AG04450 (cell line): ENCODE measurements at regions of chr18 and their contacts with region 1.

Region 1: DNA sequence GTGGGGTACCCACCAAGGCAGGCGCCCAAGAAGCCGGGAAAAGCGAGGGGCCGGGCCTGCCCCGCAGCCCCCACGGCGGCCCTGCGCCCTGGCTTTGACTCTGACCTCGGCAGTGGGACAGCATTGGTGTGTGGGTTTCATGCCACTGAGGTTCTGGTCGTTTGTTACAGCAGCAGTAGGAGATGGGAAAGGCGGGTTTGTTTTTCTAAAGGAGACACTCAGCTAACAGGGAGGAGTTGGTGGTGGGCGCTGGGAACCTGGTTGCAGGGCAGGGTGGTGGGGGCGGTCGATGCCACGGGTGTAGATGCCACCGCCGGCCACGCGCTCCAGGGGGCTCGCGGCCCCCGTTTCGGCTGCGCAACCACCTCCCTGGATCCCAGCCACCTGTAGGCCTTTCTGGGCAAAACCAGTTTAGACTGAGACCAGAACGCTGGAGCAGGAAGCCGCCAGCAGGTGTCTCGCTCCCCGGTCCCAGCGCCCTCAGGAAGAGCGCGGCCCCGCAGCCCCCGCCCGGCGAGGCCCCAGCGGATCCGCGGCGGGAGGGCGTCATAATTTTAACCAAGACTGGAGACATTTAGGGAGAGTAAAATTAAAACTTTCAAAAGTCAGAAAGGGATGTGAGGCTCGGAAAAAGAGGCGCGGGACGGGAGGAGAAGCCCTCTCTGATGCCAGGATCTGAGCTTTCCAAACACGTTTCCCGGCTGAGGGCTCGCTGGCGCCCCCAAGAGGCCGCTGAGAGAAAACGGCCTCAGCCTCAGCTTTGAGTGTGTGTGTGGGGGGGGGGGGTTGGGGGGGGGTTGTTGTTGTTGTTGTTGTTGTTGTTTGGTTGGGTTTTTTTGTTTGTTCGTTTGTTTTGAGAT is 17.4 kb downstream of the CIDEA start:
- DNase-seq: no peak
- H3K4me3 ChIP-seq: peak overlapping the region; percentile 59
- H3K27ac ChIP-seq: peak overlapping the region; percentile 31
- H3K27me3 ChIP-seq: peaks cover 3% of the 10 kb centered on the region
- CTCF ChIP-seq: peak; percentile 75

Region 2: GRCh38 chr18:12236934-12237832 is 34.4 kb before region 1 on chr18:
- CTCF ChIA-PET with region 1: interaction called, 16 read pairs
- POLR2A ChIA-PET with region 1: no interaction called
- DNase-seq: no peak
- H3K4me3 ChIP-seq: no peak overlapping the region
- H3K27ac ChIP-seq: peak overlapping the region; percentile 11
- H3K27me3 ChIP-seq: peaks cover 4% of the 10 kb centered on the region
- CTCF ChIP-seq: peak; percentile 84

Region 3: GRCh38 chr18:12255626-12256026 is 16.0 kb before region 1 on chr18:
- CTCF ChIA-PET with region 1: interaction called, 25 read pairs
- POLR2A ChIA-PET with region 1: no interaction called
- DNase-seq: no peak
- H3K4me3 ChIP-seq: no peak overlapping the region
- H3K27ac ChIP-seq: no peak overlapping the region
- H3K27me3 ChIP-seq: peaks cover 46% of the 10 kb centered on the region
- CTCF ChIP-seq: no peak

Region 4: GRCh38 chr18:12287684-12288402 is 16.2 kb after region 1 on chr18:
- CTCF ChIA-PET with region 1: interaction called, 83 read pairs
- POLR2A ChIA-PET with region 1: interaction called, 3 read pairs
- DNase-seq: peak; percentile 85
- H3K4me3 ChIP-seq: peak overlapping the region; percentile 61
- H3K27ac ChIP-seq: peak overlapping the region; percentile 99
- H3K27me3 ChIP-seq: no peaks in the 10 kb centered on the region
- CTCF ChIP-seq: 0 out of 2 replicates have a peak, but pooled peaks have one; percentile 7

Region 5: DNA sequence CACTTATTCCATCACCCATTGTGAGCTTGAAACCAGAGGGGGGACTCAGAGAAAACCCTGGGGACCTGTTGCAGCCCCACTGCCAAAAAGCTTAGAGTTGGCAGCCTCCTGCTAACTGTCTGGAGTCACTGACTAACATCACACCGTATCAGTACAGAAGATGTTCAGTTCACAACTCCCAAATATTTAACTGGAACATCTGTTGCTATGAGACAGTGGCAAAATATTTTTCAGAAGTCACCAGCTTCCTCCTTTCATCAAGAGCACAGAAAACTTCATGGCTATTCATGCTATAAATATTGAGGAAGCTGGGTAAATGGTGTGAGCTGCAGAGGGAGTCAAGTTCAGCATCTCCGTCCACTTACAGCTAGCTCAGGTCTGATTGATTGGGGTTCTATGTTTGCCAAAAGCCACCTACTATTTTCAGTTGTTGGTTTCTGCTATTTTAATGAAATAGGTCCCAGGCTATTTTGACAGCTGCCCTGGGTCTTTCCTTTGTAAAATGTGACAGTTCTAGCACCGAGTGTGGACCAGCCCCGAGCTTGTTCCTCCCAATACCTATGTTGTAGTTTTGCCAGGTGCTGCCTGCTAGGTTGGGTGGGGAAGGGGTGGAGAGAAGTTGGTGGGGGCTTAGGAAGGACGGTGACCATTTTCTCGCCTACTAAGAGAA is 46.2 kb after region 1 on chr18:
- CTCF ChIA-PET with region 1: interaction called, 14 read pairs
- POLR2A ChIA-PET with region 1: interaction called, 8 read pairs
- DNase-seq: no peak
- H3K4me3 ChIP-seq: no peak overlapping the region
- H3K27ac ChIP-seq: no peak overlapping the region
- H3K27me3 ChIP-seq: no peaks in the 10 kb centered on the region
- CTCF ChIP-seq: no peak